ENCODE measurements at regions of chr9 and their contacts with region 1.

Region 1: DNA sequence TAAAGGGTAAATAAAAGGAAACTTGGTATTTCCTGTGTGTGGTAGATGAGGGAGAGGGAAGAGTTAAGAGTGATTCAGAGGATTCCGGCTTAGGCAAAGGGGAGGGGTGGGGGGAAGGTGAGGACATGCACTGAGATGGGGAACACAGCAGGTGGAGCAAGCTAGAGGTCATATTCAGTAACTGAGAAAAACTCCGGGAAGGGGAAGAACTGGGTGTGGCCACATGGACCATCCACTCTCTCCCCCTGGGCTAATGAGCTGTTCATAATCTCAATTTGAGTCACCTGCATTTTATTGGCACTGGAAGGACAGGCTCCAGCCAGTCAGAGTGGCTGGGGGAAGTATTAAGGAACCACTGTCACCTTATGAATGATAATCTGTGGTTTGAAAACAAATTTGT is 45.0 kb upstream of the UGCG start:
- DNase-seq: peak; percentile 88
- H3K4me3 ChIP-seq: no peak overlapping the region
- H3K27ac ChIP-seq: peak overlapping the region; percentile 44
- H3K4me1 ChIP-seq: peaks cover 19% of the 10 kb centered on the region
- H3K27me3 ChIP-seq: no peaks in the 10 kb centered on the region
- CTCF ChIP-seq: peak in 1 of 2 donors; percentile 29

Region 2: DNA sequence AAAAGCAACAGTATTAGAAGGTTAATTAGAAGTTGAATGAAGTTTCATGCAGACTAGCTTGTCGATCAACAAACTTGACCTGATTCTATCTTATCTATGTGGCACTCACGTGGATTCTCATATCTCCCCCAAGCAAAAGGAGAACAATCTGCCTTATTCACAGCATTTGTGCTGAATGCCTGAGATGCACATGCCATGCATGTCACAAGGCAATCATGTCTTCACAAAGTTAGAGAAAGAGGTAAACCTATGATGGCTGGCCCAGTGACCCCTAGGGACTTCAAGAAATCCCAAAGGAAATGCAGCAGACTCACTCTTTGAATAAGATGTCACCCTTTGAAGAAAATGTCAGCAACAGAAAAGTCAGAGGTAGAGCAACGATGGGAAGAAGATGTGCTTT is 39.2 kb before region 1 on chr9:
- CTCF ChIA-PET with region 1: no interaction called
- dilution Hi-C with region 1: loop called (anchors 5 kb)
- in situ Hi-C with region 1: no loop called
- intact Hi-C with region 1: no loop called
- DNase-seq: no peak
- H3K4me3 ChIP-seq: no peak overlapping the region
- H3K27ac ChIP-seq: no peak overlapping the region
- H3K4me1 ChIP-seq: peaks cover under 1% of the 10 kb centered on the region
- H3K27me3 ChIP-seq: no peaks in the 10 kb centered on the region
- CTCF ChIP-seq: no peak

Region 3: GRCh38 chr9:111828193-111828592 is 23.4 kb before region 1 on chr9:
- CTCF ChIA-PET with region 1: no interaction called
- dilution Hi-C with region 1: no loop called
- in situ Hi-C with region 1: no loop called
- intact Hi-C with region 1: loop called (anchors 2 kb)
- DNase-seq: no peak
- H3K4me3 ChIP-seq: no peak overlapping the region
- H3K27ac ChIP-seq: no peak overlapping the region
- H3K4me1 ChIP-seq: peaks cover 18% of the 10 kb centered on the region
- H3K27me3 ChIP-seq: no peaks in the 10 kb centered on the region
- CTCF ChIP-seq: peak in 1 of 2 donors; percentile 27